ENCODE measurements at regions of chr20 and their contacts with region 1.

Region 1: GRCh38 chr20:53611449-53611894 is 17.8 kb upstream of the ZNF217 start:
- DNase-seq: peak; percentile 90
- ATAC-seq: peak; percentile 73
- H3K4me3 ChIP-seq: peak overlapping the region; percentile 3 to 41; a peak in 3 of 4 replicates
- H3K27ac ChIP-seq: peak overlapping the region; percentile 100
- H3K4me1 ChIP-seq: peaks cover 53% of the 10 kb centered on the region
- H3K27me3 ChIP-seq: no peaks in the 10 kb centered on the region
- CTCF ChIP-seq: no peak

Region 2: DNA sequence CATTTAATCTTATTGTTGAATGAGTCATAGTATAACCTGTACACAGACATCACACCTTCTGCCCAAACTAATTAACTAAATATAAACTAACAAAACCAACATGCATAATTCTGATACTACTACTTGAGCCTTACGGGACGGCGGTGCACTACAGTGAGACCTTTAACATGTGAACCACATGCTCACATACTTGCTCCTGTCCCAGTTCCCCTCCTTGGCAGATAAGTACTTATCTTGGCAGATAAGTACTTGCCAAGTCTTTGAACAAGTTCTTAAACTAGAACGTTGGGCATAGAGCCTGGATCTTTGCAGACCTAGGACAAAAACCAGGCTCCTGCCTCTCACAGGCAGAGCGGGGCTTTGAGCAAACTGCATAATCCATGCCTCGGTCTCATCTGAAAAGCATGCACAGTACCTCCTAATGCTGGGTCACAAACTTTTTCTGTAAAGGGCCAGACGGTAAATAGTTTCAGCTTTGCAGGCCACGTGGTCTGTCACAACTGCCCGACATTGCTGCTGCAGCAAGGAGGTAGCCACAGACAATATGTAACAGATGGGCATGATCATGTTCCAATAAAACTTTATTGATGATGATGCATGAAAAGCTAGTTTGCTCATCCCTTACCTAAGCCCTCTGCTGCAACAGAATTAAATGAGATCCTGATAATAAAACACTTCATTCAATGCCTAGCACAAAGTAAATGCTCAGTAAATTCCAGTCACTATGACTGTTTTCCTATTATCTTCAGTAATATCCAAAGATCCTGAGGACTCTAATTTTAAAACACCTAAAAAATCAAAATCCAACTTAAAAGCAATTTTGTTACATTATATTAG is 40.7 kb before region 1 on chr20:
- CTCF ChIA-PET with region 1: no interaction called
- POLR2A ChIA-PET with region 1: no interaction called
- in situ Hi-C with region 1: no loop called
- intact Hi-C with region 1: no loop called
- DNase-seq: no peak
- ATAC-seq: peak; percentile 38
- H3K4me3 ChIP-seq: no peak overlapping the region
- H3K27ac ChIP-seq: peak overlapping the region; percentile 66
- H3K4me1 ChIP-seq: peaks cover 84% of the 10 kb centered on the region
- H3K27me3 ChIP-seq: no peaks in the 10 kb centered on the region
- CTCF ChIP-seq: no peak

Region 3: DNA sequence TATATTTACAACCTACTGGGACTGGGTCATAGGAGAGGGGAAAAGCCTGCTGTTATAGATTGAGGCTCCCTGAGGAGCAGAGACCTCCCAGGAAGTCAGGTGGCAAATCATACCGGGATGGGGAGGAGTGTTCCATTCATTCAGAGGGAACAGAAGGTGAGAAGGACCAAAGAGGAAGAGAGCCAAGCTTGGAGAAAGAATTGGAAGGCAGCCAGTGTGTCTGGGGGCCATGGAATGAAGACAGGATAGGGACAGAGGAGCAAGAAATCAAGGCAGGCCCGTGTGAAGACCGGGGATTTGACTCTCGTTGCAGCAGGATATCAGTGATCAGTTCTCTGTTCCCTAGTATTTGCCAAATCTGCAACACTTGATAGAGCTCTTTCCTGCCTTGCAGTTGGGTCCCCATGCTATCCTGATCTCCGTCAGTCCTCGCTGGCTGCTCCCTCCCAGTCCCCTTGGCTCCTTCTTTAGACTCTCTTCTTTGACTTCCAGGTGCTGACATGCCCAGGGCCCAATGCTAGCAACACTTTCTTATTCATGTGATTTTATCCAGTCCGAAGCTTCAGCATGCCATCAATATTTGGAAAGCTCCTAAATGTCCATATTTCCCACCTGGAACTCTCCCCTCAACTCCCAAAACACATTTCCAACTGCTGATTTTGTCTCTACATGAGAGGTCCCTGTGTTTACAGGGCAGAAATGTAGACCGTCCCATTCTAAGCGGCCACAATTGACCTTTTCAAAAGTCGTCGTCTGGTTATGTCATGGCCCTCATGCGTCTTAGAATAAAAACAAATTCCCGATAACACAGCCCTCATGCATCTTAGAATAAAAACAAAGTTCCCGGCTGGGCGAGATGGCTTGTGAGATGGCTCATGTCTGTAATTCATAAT is 11.8 kb before region 1 on chr20:
- CTCF ChIA-PET with region 1: interaction called, 3 read pairs
- POLR2A ChIA-PET with region 1: interaction called, 22 read pairs
- in situ Hi-C with region 1: no loop called
- intact Hi-C with region 1: no loop called
- DNase-seq: no peak
- ATAC-seq: peak; percentile 36
- H3K4me3 ChIP-seq: peak overlapping the region in 1 of 2 experiments; percentile 33; a peak in 2 of 4 replicates
- H3K27ac ChIP-seq: peak overlapping the region; percentile 98
- H3K4me1 ChIP-seq: peaks cover 40% of the 10 kb centered on the region
- H3K27me3 ChIP-seq: no peaks in the 10 kb centered on the region
- CTCF ChIP-seq: no peak

Region 4: GRCh38 chr20:53623454-53624211 is 12.2 kb after region 1 on chr20:
- CTCF ChIA-PET with region 1: no interaction called
- POLR2A ChIA-PET with region 1: interaction called, 10 read pairs
- in situ Hi-C with region 1: no loop called
- intact Hi-C with region 1: no loop called
- DNase-seq: peak; percentile 87
- ATAC-seq: peak; percentile 75
- H3K4me3 ChIP-seq: peak overlapping the region; percentile 6 to 49
- H3K27ac ChIP-seq: peak overlapping the region; percentile 100
- H3K4me1 ChIP-seq: peaks cover 47% of the 10 kb centered on the region
- H3K27me3 ChIP-seq: no peaks in the 10 kb centered on the region
- CTCF ChIP-seq: no peak

Region 5: GRCh38 chr20:53660078-53660909 is 48.8 kb after region 1 on chr20:
- CTCF ChIA-PET with region 1: no interaction called
- POLR2A ChIA-PET with region 1: interaction called, 13 read pairs
- in situ Hi-C with region 1: no loop called
- intact Hi-C with region 1: no loop called
- DNase-seq: no peak
- ATAC-seq: peak; percentile 43
- H3K4me3 ChIP-seq: no peak overlapping the region
- H3K27ac ChIP-seq: peak overlapping the region; percentile 100
- H3K4me1 ChIP-seq: peaks cover 60% of the 10 kb centered on the region
- H3K27me3 ChIP-seq: no peaks in the 10 kb centered on the region
- CTCF ChIP-seq: no peak

Region 6: DNA sequence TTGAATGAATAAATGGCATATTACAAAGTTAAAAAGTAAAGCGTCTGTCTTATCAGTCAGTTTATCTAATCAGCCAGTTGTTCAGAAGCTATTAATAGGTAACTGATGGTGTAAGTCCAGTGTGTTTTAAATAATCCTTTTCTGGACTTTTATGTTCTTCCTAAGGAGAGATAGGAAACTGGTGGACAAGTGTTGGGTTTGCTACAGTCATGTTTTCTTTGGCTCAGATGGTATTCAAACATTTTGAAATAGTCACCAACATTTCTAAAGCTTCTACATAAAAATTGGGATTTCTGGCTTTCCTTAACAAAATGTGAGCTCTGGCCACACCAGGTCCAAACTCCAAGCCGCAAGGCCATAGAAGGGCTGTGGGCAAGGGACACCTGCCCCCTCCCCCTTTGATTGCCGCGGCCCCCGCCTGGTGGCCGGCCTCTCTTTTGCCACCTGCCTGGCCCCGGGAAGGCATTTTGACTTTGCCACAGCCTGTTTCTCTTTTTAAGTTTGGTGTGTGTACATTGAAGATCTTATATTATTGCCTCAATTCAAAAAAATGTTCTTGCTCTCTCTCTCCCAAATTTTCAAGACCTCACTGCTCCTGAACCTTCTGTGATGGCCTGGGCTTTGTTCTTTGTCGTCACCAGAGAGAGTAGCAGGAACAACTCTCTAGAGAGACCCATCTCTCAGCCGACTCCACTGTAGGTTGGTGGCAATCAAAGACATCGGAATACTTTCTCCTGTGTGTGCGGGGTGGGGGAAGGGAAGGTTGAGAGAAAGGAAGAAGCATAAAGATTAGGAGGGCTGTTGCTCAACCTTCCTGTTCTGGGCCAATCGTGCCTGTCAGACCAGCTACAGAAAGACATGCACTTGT is 66.2 kb after region 1 on chr20:
- CTCF ChIA-PET with region 1: interaction called, 10 read pairs
- POLR2A ChIA-PET with region 1: no interaction called
- in situ Hi-C with region 1: no loop called
- intact Hi-C with region 1: no loop called
- DNase-seq: no peak
- ATAC-seq: peak; percentile 86
- H3K4me3 ChIP-seq: peak overlapping the region in 1 of 2 experiments; percentile 32; a peak in 2 of 4 replicates
- H3K27ac ChIP-seq: peak overlapping the region; percentile 98
- H3K4me1 ChIP-seq: peaks cover 46% of the 10 kb centered on the region
- H3K27me3 ChIP-seq: no peaks in the 10 kb centered on the region
- CTCF ChIP-seq: no peak

Region 7: DNA sequence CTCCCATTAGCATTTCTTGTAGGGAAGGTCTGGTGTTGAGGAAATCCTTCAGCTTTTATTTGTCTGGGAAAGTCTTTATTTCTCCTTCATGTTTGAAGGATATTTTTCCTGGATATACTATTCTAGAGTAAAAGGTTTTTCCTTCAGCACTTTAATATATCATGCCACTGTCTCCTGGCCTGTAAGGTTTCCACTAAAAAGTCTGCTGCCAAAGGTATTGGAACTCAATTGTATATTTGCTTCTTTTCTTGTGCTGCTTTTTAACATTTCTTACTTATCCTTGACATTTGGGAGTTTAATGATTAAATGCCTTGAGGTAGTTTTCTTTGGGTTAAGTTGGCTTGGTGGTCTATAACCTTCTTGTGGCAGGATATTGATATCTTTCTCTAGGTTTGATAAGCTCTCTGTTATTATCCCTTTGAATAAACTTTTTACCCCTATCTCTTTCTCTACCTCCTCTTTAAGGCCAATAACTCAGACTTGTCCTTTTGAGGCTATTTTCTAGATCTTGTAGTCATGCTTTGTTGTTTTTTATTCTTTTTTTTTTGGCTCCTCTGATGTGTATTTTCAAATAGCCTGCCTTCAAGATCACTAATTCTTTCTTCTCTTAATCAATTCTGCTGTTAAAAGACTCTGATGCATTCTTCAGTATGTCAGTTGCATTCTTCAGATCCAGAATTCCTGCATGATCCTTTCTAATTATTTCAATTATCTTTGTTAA is 207.1 kb after region 1 on chr20:
- CTCF ChIA-PET with region 1: no interaction called
- POLR2A ChIA-PET with region 1: no interaction called
- in situ Hi-C with region 1: no loop called
- intact Hi-C with region 1: no loop called
- DNase-seq: no peak
- ATAC-seq: no peak
- H3K4me3 ChIP-seq: no peak overlapping the region
- H3K27ac ChIP-seq: peak overlapping the region; percentile 87
- H3K4me1 ChIP-seq: no peaks in the 10 kb centered on the region
- H3K27me3 ChIP-seq: no peaks in the 10 kb centered on the region
- CTCF ChIP-seq: no peak

Measured in Panc1 (cell line).